H1 (cell line): ENCODE measurements at regions of chr1 and their contacts with region 1.

Region 1: DNA sequence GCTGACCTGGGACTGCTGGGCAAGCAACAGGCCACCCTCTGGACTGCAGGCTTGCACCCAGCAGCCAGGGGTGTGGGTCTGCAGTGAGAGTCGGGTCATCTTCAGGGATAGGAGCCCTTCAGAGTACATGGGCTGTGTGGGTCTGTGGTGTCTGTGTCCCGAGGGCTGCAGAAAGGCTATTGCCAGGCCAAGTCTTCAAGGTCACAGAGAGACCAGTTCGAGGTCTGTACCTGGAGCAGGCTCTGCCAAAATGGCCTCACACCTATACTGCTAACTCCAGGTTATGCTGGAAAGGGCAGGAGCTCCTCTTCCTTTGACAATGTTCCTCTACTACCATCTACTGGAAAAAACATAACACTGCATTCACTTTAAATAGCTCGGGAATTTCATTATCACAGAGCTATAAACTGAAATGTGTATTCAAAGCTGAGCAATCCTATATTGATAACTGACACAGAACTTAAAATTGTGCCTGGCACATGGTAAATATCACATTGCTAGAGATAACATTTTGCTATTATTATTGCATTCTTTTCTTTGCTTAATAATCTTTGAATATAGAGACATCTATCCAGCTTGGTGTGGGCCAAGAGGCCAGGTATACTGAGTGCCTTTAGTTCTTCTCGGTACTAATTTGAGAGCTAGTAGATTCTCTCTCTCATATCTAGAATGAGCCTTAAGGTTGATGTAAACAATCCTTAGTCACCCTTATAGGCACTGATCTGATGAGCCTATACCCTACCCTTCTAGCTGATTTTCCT is 6.9 kb upstream of the DNAH14 start:
- DNase-seq: peak in 1 of 2 experiments; percentile 54
- H3K4me3 ChIP-seq: no peak overlapping the region
- H3K27ac ChIP-seq: no peak overlapping the region
- H3K4me1 ChIP-seq: 0 out of 7 replicates have a peak, but pooled peaks cover 0 to 2% (median 0%) of the 10 kb centered on the region in 4 experiments
- H3K27me3 ChIP-seq: no peaks in the 10 kb centered on the region
- CTCF ChIP-seq: peak in 2 of 3 experiments; percentile 61 to 79; a peak in 3 of 4 replicates
- EP300 ChIP-seq: no peak
- POLR2A ChIP-seq: no peak
- RAD21 ChIP-seq: peak; percentile 91 to 93

Region 2: DNA sequence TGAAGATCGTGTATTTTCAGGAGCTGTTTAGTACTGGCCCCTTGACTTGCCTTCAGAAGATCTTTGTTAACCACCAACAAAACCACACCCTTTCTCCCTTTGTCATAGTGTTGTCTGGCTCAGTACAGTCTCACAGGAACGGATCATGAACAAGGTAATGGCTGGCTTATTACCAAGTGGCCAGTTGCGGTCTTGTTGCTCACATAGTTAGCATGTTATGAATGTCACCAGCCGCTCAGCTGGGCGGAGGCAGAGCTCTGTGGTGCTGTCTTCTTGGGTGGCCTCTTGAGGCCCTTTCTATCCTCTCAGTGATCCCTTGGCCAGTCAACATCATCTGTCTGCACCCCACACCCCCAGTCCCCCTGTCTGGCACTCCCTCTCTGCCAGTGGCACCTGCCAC is 285.1 kb before region 1 on chr1:
- CTCF ChIA-PET with region 1: interaction called, 11 read pairs
- POLR2A ChIA-PET with region 1: no interaction called
- DNase-seq: no peak
- H3K4me3 ChIP-seq: no peak overlapping the region
- H3K27ac ChIP-seq: no peak overlapping the region
- H3K4me1 ChIP-seq: peaks cover 0 to 7% (median 3%) of the 10 kb centered on the region in 4 experiments; a peak in 5 of 7 replicates
- H3K27me3 ChIP-seq: no peaks in the 10 kb centered on the region
- CTCF ChIP-seq: no peak
- EP300 ChIP-seq: no peak
- POLR2A ChIP-seq: no peak
- RAD21 ChIP-seq: no peak

Region 3: DNA sequence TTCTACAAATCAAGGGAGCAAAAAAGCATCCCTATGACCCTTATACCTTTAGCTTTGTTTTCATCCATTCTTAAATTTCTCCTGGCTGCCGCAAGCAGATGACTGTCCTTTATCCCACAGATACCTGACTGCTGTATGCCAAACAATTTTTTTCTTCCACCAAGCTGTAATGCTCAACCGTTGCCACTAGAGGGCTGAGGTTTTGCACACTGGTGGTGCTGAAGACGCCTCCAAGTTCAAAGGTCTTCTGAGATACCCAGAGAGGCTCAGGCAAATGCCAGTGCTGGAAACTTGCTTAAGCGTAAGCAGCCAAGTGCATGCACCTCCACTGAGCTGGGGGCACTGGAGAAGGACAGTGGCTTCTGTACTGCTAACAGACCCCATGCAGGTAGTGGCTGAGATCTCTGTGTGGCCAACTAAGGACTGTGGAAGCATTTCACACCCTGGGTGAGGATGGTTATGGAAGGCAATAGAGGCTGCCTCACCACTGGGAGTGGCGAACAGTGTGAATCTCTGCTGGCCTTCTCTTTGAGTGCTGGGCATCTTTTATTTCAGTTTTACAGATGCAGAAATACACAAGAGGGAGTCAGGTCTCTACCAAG is 277.9 kb before region 1 on chr1:
- CTCF ChIA-PET with region 1: interaction called, 14 read pairs
- POLR2A ChIA-PET with region 1: no interaction called
- DNase-seq: peak; percentile 41 to 79
- H3K4me3 ChIP-seq: no peak overlapping the region
- H3K27ac ChIP-seq: no peak overlapping the region
- H3K4me1 ChIP-seq: no peaks in the 10 kb centered on the region
- H3K27me3 ChIP-seq: no peaks in the 10 kb centered on the region
- CTCF ChIP-seq: peak; percentile 61 to 88 (median 87)
- EP300 ChIP-seq: no peak
- POLR2A ChIP-seq: no peak
- RAD21 ChIP-seq: peak; percentile 82 to 86

Region 4: GRCh38 chr1:224856973-224857372 is 65.6 kb before region 1 on chr1:
- CTCF ChIA-PET with region 1: interaction called, 21 read pairs
- POLR2A ChIA-PET with region 1: no interaction called
- DNase-seq: no peak
- H3K4me3 ChIP-seq: no peak overlapping the region
- H3K27ac ChIP-seq: no peak overlapping the region
- H3K4me1 ChIP-seq: peaks cover 0 to 4% (median 3%) of the 10 kb centered on the region in 4 experiments
- H3K27me3 ChIP-seq: no peaks in the 10 kb centered on the region
- CTCF ChIP-seq: no peak
- EP300 ChIP-seq: no peak
- POLR2A ChIP-seq: no peak
- RAD21 ChIP-seq: no peak

Region 5: DNA sequence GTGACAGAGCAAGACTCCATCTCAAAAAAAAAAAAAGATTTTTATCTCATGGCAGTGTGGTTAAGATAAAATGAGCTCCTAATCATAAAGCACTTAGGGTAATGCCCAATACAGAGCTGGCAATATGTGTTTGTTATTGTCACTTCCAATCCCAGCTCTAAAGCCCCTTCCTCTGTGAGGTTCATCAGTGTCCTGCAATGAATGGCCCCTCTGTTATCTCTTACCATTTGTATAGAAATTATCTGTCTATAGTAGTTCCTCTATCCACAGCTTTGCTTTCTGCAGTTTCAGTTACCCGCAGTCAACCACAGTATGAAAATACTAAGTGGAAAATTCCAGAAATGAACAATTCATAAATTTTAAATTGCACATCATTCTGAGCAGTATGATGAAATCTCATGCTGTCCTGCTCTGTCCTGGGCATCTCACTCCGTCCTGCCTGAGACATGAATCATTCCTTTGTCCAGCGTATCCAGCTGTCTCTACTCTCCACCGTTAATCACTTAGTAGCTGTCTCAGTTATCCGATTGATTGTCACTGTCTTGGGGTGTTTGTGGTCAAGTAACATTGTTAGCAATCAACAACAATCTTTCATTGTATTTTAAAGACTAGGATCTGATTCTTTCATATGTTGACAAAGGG is 43.3 kb before region 1 on chr1:
- CTCF ChIA-PET with region 1: interaction called, 11 read pairs
- POLR2A ChIA-PET with region 1: no interaction called
- DNase-seq: no peak
- H3K4me3 ChIP-seq: no peak overlapping the region
- H3K27ac ChIP-seq: no peak overlapping the region
- H3K4me1 ChIP-seq: peaks cover 6 to 24% (median 16%) of the 10 kb centered on the region in 4 experiments; a peak in 5 of 7 replicates
- H3K27me3 ChIP-seq: no peaks in the 10 kb centered on the region
- CTCF ChIP-seq: no peak
- EP300 ChIP-seq: no peak
- POLR2A ChIP-seq: no peak
- RAD21 ChIP-seq: no peak

Region 6: DNA sequence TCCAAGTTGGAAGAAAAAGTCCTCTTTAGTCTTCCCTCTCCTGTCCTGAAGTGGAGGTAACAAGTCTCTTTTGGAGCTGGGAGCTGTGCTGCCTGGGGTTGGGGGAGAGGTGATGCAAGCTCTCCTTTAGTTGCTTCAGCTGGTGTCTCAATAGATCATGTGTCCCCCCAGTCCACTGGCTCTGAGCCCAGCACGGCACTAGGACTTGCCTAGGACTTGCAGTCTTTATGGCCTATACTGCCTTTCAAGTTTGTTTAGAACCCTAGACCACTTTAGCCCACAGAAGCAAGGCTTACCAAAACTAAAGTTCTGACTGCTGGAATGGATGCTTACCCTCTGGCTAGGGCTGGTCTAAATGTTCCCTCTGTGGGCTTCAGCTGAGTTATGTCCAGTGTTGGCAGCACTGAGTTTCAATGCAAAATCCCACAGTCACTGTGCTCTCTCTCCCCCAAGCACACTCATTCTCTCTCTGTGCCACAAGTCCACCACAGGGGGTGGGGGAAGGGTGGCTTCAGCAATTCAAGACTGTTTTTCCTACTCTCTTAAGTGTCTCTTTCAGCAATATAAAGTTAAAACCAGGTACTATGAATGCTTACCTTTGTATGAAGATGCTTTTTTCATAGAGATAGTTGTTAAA is 191.9 kb after region 1 on chr1:
- CTCF ChIA-PET with region 1: no interaction called
- POLR2A ChIA-PET with region 1: no interaction called
- DNase-seq: no peak
- H3K4me3 ChIP-seq: no peak overlapping the region
- H3K27ac ChIP-seq: no peak overlapping the region; the same call in 1 of the 2 replicates
- H3K4me1 ChIP-seq: no peaks in the 10 kb centered on the region
- H3K27me3 ChIP-seq: no peaks in the 10 kb centered on the region
- CTCF ChIP-seq: no peak
- EP300 ChIP-seq: no peak
- POLR2A ChIP-seq: no peak
- RAD21 ChIP-seq: no peak